Activated CD4-positive, alpha-beta T cell treated with anti-CD3 and anti-CD28 coated beads for 36 hours (primary cell): ENCODE measurements at regions of chr11 and their contacts with region 1.

Region 1: GRCh38 chr11:20387241-20388095 is at the start of gene PRMT3:
- DNase-seq: peak; percentile 98
- ATAC-seq: peak; percentile 90
- H3K4me3 Mint-ChIP-seq: peak within 1 kb of the TSS; percentile 98
- H3K27ac Mint-ChIP-seq: peak within 1 kb of the TSS; percentile 99
- H3K4me1 Mint-ChIP-seq: peaks cover 27% of the 10 kb centered on the region
- H3K27me3 Mint-ChIP-seq: no peaks in the 10 kb centered on the region
- total RNA-seq, gene PRMT3: 36.5 to 39.0 TPM

Region 2: GRCh38 chr11:20363500-20364411 is 23.7 kb before region 1 on chr11 and contains the start of gene HTATIP2:
- CTCF ChIA-PET with region 1: interaction called, 4 read pairs
- POLR2A ChIA-PET with region 1: no interaction called
- intact Hi-C with region 1: loop called (anchors 1 kb)
- DNase-seq: peak; percentile 82
- ATAC-seq: peak; percentile 79
- H3K4me3 Mint-ChIP-seq: peak within 1 kb of the TSS; percentile 76
- H3K27ac Mint-ChIP-seq: peak within 1 kb of the TSS; percentile 92
- H3K4me1 Mint-ChIP-seq: peaks cover 68% of the 10 kb centered on the region
- H3K27me3 Mint-ChIP-seq: no peaks in the 10 kb centered on the region
- total RNA-seq, gene HTATIP2: 41.4 to 60.4 TPM

Region 3: GRCh38 chr11:20415432-20415831 is 28.0 kb after region 1 on chr11:
- CTCF ChIA-PET with region 1: no interaction called
- POLR2A ChIA-PET with region 1: no interaction called
- intact Hi-C with region 1: loop called in 1 of 2 experiments (anchors 2 kb)
- DNase-seq: no peak
- ATAC-seq: peak; percentile 33
- H3K4me3 Mint-ChIP-seq: no peak overlapping the region
- H3K27ac Mint-ChIP-seq: no peak overlapping the region
- H3K4me1 Mint-ChIP-seq: peaks cover 22% of the 10 kb centered on the region
- H3K27me3 Mint-ChIP-seq: no peaks in the 10 kb centered on the region

Region 4: GRCh38 chr11:20609727-20610707 is 222.5 kb after region 1 on chr11:
- CTCF ChIA-PET with region 1: no interaction called
- POLR2A ChIA-PET with region 1: no interaction called
- intact Hi-C with region 1: loop called in 1 of 2 experiments (anchors 2 kb)
- DNase-seq: peak; percentile 81
- ATAC-seq: peak; percentile 86
- H3K4me3 Mint-ChIP-seq: no peak overlapping the region
- H3K27ac Mint-ChIP-seq: no peak overlapping the region
- H3K4me1 Mint-ChIP-seq: peaks cover 7% of the 10 kb centered on the region
- H3K27me3 Mint-ChIP-seq: peaks cover 62% of the 10 kb centered on the region

Region 5: GRCh38 chr11:20623252-20623651 is 235.8 kb after region 1 on chr11:
- CTCF ChIA-PET with region 1: no interaction called
- POLR2A ChIA-PET with region 1: no interaction called
- intact Hi-C with region 1: no loop called
- DNase-seq: no peak
- ATAC-seq: no peak
- H3K4me3 Mint-ChIP-seq: no peak overlapping the region
- H3K27ac Mint-ChIP-seq: no peak overlapping the region
- H3K4me1 Mint-ChIP-seq: no peaks in the 10 kb centered on the region
- H3K27me3 Mint-ChIP-seq: peaks cover 5% of the 10 kb centered on the region